ENCODE measurements at regions of chr1 and their contacts with region 1.

Region 1: GRCh38 chr1:180515864-180516388 is 13.5 kb upstream of the ACBD6 start:
- DNase-seq: peak; percentile 73
- ATAC-seq: peak; percentile 100
- H3K4me3 Mint-ChIP-seq: no peak overlapping the region
- H3K27ac Mint-ChIP-seq: no peak overlapping the region
- H3K4me1 Mint-ChIP-seq: peaks cover 4% of the 10 kb centered on the region
- H3K27me3 Mint-ChIP-seq: peaks cover 3% of the 10 kb centered on the region

Region 2: DNA sequence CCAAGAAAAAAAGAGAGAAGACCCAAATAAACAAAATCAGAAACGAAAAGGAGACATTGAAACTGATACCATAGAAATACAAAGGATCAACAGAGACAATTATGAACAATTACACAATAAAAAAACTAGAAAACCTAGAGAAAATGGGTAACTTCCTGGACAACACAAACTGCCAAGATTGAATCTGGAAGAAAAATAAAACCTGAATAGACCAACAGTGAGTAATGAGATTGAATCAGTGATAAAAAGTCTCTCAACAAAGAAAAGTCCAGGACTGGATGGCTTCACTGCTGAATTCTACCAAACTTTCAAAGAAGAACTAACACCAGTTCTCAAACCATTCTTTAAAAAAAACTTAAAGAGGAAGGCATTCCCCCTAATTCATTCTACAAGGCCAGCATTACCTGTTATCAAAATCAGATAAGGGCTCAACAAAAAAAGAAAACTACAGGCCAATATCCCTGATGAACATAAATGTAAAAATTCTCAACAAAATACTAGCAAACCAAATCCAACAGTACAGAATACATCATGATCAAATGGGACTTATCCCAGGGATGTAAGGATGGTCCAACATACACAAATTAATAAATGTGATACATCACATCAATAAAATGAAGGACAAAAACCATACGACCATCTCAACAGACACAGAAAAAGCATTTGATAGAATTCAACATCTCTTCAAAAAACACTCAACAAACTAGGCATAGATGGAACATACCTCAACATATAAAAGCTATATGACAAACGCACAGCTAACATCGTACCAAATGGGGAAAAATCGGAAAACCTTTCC is 133.4 kb before region 1 on chr1:
- CTCF ChIA-PET with region 1: no interaction called
- POLR2A ChIA-PET with region 1: no interaction called
- DNase-seq: no peak
- ATAC-seq: no peak
- H3K4me3 Mint-ChIP-seq: no peak overlapping the region
- H3K27ac Mint-ChIP-seq: no peak overlapping the region
- H3K4me1 Mint-ChIP-seq: no peaks in the 10 kb centered on the region
- H3K27me3 Mint-ChIP-seq: no peaks in the 10 kb centered on the region

Region 3: DNA sequence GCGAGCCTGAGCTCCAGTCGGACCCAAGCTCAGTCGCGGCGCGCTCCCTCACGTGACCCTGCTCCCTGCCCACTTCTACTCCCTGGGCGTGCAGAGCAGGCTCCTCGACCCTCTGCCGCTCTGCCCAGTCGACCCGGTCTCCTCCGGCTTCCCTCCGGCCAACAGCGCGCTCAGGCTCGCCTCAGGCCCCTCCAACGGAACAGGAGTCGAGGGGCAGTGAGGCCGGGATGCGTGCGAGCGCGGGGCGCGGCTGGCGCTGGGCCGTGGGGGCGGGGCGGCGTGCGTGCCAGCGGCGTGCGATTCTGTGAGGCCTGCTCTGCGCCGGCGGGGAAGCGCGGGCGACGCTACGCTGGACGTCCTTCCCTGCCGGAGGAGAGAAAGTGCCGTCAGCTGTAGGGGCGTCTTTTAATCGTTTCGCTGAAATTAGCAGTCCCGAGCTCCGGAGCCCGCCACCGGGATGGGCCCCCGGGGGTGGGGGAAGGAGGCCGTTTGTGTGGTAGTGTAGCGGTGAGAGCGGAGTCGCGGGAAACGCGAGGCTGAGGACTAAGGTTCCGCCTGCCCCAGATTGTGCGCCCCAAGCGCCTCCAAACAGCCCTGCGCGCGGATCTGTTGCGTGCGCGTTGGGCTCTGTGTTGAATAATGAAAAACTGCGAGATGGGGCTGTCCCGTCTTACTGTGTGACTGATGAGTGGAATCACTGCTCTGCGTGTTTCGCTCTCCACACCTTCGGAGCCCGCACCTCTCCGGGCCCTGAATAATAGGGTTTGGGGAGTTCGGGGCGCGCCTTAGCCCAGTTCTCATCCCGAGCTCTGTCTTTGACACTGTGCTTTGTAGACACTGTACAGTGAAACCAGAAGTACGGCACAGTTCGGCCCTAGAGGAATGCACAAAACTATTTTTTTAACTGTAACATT is 13.3 kb before region 1 on chr1 and contains the start of gene ACBD6:
- CTCF ChIA-PET with region 1: interaction called, 28 read pairs
- POLR2A ChIA-PET with region 1: interaction called, 4 read pairs
- DNase-seq: peak; percentile 89
- ATAC-seq: peak; percentile 93
- H3K4me3 Mint-ChIP-seq: peak within 1 kb of the TSS; percentile 92
- H3K27ac Mint-ChIP-seq: peak within 1 kb of the TSS; percentile 97
- H3K4me1 Mint-ChIP-seq: peaks cover 32% of the 10 kb centered on the region
- H3K27me3 Mint-ChIP-seq: no peaks in the 10 kb centered on the region
- total RNA-seq, gene ACBD6: 35.7 to 37.7 TPM

Region 4: GRCh38 chr1:180533266-180533987 is 17.5 kb after region 1 on chr1:
- CTCF ChIA-PET with region 1: interaction called, 29 read pairs
- POLR2A ChIA-PET with region 1: no interaction called
- DNase-seq: peak; percentile 74
- ATAC-seq: peak; percentile 81
- H3K4me3 Mint-ChIP-seq: no peak overlapping the region
- H3K27ac Mint-ChIP-seq: no peak overlapping the region
- H3K4me1 Mint-ChIP-seq: peaks cover 3% of the 10 kb centered on the region
- H3K27me3 Mint-ChIP-seq: peaks cover 10% of the 10 kb centered on the region

Region 5: GRCh38 chr1:180548686-180549317 is 32.9 kb after region 1 on chr1:
- CTCF ChIA-PET with region 1: no interaction called
- POLR2A ChIA-PET with region 1: no interaction called
- DNase-seq: no peak
- ATAC-seq: no peak
- H3K4me3 Mint-ChIP-seq: no peak overlapping the region
- H3K27ac Mint-ChIP-seq: no peak overlapping the region
- H3K4me1 Mint-ChIP-seq: no peaks in the 10 kb centered on the region
- H3K27me3 Mint-ChIP-seq: peaks cover 5% of the 10 kb centered on the region

Region 6: DNA sequence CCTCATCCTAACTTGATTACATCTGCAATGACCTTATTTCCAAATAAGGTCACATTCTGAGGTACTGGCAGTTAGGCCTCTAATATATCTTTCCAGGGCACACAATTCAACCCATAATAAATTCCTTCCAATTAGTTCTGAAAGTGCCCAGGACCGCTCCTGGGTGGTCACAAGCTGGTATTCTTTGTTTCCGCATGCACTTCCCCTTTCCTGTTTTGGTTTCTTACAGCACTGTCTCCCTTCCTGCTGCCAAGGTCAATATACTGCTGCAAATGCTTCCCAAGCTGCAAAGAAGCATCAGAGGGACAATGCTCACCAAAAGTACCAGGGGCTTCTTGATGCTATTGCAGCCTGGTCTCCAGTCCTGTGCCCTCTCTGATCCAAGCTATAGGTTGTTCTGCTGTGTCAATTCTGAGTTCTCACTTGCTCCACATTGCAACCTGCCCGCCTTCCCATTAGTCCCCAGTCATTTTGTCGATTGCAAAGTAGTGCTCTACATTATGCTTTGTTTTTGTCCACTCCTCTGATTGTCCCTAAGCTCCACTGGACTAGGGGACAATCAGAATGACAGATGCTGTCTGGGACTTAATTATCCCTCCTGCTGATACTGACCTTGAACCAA is 102.0 kb after region 1 on chr1:
- CTCF ChIA-PET with region 1: no interaction called
- POLR2A ChIA-PET with region 1: no interaction called
- DNase-seq: no peak
- ATAC-seq: no peak
- H3K4me3 Mint-ChIP-seq: no peak overlapping the region
- H3K27ac Mint-ChIP-seq: no peak overlapping the region
- H3K4me1 Mint-ChIP-seq: no peaks in the 10 kb centered on the region
- H3K27me3 Mint-ChIP-seq: peaks cover 7% of the 10 kb centered on the region